ENCODE measurements at regions of chr9 and their contacts with region 1.

Region 1: GRCh38 chr9:115883457-115884329 is 269.9 kb upstream of the PAPPA start:
- DNase-seq: peak; percentile 86
- H3K4me3 Mint-ChIP-seq: no peak overlapping the region
- H3K27ac Mint-ChIP-seq: no peak overlapping the region
- H3K4me1 Mint-ChIP-seq: peaks cover 6% of the 10 kb centered on the region
- H3K27me3 Mint-ChIP-seq: no peaks in the 10 kb centered on the region
- CTCF ChIP-seq: peak; percentile 74

Region 2: GRCh38 chr9:115944166-115944948 is 60.7 kb after region 1 on chr9:
- CTCF ChIA-PET with region 1: interaction called, 8 read pairs
- POLR2A ChIA-PET with region 1: no interaction called
- intact Hi-C with region 1: loop called (anchors 1 kb)
- DNase-seq: peak; percentile 99
- H3K4me3 Mint-ChIP-seq: peak overlapping the region; percentile 60
- H3K27ac Mint-ChIP-seq: peak overlapping the region; percentile 100
- H3K4me1 Mint-ChIP-seq: peaks cover 71% of the 10 kb centered on the region
- H3K27me3 Mint-ChIP-seq: no peaks in the 10 kb centered on the region
- CTCF ChIP-seq: no peak

Region 3: DNA sequence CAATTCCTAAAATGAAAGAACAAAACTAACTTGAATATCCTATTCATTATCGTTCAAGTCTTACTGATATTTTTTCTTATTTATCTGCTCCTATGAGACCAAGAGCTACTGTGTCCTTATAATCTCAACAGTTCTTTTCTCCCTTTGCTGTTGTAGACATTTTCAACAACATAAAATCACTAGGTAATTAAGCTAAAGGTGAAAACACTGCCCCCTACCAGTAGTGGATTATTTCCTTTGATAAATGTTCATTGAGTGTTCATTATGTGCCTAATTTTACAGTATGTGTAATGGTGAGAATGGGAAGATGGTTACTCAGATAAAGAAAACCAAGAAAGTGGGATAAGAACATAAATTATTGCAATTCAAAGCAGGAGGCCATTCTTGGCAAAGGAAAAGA is 228.5 kb after region 1 on chr9:
- CTCF ChIA-PET with region 1: interaction called, 5 read pairs
- POLR2A ChIA-PET with region 1: no interaction called
- intact Hi-C with region 1: loop called (anchors 1 kb)
- DNase-seq: peak; percentile 59
- H3K4me3 Mint-ChIP-seq: no peak overlapping the region
- H3K27ac Mint-ChIP-seq: no peak overlapping the region
- H3K4me1 Mint-ChIP-seq: peaks cover 9% of the 10 kb centered on the region
- H3K27me3 Mint-ChIP-seq: no peaks in the 10 kb centered on the region
- CTCF ChIP-seq: peak; percentile 18

Region 4: DNA sequence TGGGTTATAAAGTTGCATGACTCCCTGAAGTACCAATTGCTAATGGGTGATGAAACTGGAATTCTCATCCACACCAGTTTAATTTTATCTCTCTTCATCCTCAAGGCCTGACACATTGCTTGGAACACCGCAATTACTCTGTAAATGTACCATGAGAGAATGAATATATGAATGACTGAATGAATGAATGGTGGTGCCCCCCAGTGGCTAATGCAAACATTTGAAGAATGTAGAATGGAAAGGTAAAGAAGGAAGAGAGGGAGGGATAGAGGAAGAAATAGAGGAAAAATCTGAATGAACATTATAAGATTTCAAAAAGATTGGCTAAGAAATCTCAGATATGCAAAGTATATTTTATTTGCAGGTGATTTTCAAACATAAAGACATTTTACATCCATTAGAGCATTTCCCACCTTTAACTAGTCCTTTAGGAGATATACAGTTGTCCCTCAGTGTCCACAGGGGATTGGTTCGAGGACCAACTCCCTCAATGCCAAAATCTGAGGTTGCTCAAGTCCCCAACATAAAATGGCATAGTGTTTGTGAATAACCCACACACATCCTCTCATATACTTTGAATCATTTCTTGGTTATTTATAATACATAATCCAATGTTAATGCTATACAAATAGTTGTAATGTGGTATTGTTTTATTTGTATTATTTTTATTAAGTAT is 283.2 kb after region 1 on chr9:
- CTCF ChIA-PET with region 1: interaction called, 6 read pairs
- POLR2A ChIA-PET with region 1: no interaction called
- intact Hi-C with region 1: loop called (anchors 1 kb)
- DNase-seq: no peak
- H3K4me3 Mint-ChIP-seq: no peak overlapping the region
- H3K27ac Mint-ChIP-seq: no peak overlapping the region
- H3K4me1 Mint-ChIP-seq: peaks cover 16% of the 10 kb centered on the region
- H3K27me3 Mint-ChIP-seq: no peaks in the 10 kb centered on the region
- CTCF ChIP-seq: peak; percentile 19

Region 5: GRCh38 chr9:116572095-116572748 is 688.5 kb after region 1 on chr9:
- CTCF ChIA-PET with region 1: interaction called, 72 read pairs
- POLR2A ChIA-PET with region 1: no interaction called
- intact Hi-C with region 1: loop called (anchors 1 kb)
- DNase-seq: peak; percentile 80
- H3K4me3 Mint-ChIP-seq: no peak overlapping the region
- H3K27ac Mint-ChIP-seq: no peak overlapping the region
- H3K4me1 Mint-ChIP-seq: peaks cover 4% of the 10 kb centered on the region
- H3K27me3 Mint-ChIP-seq: no peaks in the 10 kb centered on the region
- CTCF ChIP-seq: peak; percentile 95

Region 6: DNA sequence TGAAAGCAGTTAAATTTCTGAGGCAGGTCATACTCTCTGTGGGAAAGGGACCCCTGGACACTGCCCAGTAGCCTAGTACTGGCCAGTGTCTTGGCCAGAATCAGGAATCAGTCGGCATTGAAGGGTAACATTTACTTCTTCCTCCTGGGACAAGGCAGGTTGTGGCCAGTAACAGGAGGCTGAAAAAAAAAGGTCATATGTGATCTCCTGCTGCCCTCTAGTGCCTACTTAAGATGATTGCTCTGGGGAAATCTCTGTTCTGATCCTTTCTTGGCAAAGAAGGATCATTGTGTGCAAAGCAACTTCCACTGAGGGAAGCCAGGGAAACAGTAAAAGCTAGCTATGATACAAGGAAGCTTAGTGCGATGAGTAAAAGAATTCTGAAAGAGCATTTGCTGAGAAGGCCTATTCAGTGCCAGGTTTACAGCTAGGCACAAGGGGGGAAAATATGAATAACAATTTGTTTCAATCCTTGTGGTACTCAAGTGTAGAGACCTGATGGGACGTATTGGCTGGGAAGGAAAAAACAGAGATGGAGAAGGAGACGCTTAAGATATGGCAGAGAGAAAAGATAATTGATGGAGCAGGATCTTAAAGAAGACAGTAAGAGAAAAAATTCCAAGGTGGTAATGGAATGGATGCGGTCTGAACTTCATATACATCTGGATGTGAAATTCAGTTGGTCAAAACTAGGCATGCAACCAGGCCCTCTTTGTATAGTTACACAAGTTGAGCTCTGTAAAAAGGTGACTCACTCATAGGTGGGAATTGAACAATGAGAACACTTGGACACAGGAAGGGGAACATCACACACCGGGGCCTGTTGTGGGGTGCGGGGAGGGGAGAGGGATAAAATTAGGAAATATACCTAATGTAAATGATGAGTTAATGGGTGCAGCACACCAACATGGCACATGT is 777.6 kb after region 1 on chr9:
- CTCF ChIA-PET with region 1: interaction called, 4 read pairs
- POLR2A ChIA-PET with region 1: no interaction called
- intact Hi-C with region 1: loop called (anchors 2 kb)
- DNase-seq: peak; percentile 73
- H3K4me3 Mint-ChIP-seq: no peak overlapping the region
- H3K27ac Mint-ChIP-seq: no peak overlapping the region
- H3K4me1 Mint-ChIP-seq: peaks cover 9% of the 10 kb centered on the region
- H3K27me3 Mint-ChIP-seq: no peaks in the 10 kb centered on the region
- CTCF ChIP-seq: peak; percentile 76